GM18951 (cell line): ENCODE measurements at regions of chr21 and their contacts with region 1.

Region 1: DNA sequence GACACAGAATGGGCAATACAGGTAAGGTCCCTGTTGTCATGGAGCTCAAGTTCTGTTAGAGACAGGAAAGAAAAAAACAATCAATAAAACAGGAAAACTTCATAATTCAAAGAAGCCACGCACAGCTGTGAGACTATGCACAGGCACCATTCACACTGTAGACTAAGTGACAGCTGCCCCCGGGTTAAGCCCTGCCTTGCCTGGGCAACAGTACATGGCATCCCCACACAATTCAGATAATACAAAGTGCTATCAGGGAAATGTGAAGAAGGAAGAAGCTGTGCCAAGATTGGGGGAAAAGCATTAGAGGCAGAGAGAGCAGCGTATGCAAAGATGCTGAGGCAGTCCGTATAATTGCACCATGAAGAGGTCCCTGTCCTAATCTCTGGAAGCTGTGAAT is 9.0 kb upstream of the KCNE2 start:
- POLR2A ChIP-seq: no peak

Region 2: DNA sequence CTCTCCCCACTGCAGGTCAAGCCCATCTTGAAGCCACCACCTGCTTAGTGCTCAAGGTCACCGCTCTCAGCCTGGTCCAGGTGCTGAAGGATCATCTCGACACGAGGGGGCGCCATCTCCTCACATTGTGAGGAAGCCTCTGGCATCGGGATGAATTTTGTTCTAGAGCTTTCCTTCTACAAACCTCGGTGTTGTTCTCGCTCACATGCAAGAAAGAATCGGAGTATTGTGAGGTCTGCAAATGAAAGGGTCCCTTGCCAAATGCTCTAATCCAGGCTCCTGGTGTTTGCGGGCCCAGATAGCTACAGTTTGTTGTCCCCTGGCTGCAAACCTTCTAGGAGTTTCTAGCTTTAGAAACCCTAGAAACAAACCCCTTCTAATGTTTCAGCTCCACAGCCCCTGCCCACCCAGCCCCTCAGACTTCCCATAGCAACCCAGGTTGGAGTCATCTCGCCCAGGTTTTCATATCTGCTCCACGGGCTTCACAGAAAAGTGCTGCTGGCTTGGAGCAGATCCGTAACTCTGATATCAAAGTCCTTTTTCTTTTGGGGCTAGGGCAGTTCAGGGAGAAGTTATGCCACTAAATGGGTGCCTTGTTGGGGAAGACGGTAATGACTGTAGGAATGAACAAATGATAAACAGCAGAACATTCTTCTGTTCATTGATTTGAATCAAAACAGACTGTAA is 430.6 kb before region 1 on chr21:
- in situ Hi-C with region 1: loop called (anchors 5 kb)
- POLR2A ChIP-seq: no peak